Heart left ventricle (tissue), 16 donors: ENCODE measurements at regions of chr6 and their contacts with region 1.

Region 1: GRCh38 chr6:46704562-46704961 is 16.9 kb downstream of the TDRD6 start:
- DNase-seq: no peak
- ATAC-seq: peak in 3 of 4 donors; percentile 41 to 75 (median 56)
- H3K4me3 ChIP-seq: no peak overlapping the region
- H3K27ac ChIP-seq: no peak overlapping the region
- H3K4me1 ChIP-seq: peaks cover 0 to 7% (median 0%) of the 10 kb centered on the region in 12 donors
- H3K27me3 ChIP-seq: no peaks in the 10 kb centered on the region
- CTCF ChIP-seq: peak in 7 of 12 donors; percentile 12 to 34 (median 18)
- POLR2A ChIP-seq: no peak

Region 2: GRCh38 chr6:46772762-46773161 is 68.2 kb after region 1 on chr6:
- intact Hi-C with region 1: loop called in 1 of 10 experiments (anchors 10 kb)
- DNase-seq: peak; percentile 26 to 46 (median 31)
- ATAC-seq: peak; percentile 55 to 91 (median 84)
- H3K4me3 ChIP-seq: no peak overlapping the region
- H3K27ac ChIP-seq: peak overlapping the region in 1 of 12 donors; percentile 92
- H3K4me1 ChIP-seq: peaks cover 0 to 37% (median 1%) of the 10 kb centered on the region in 12 donors
- H3K27me3 ChIP-seq: no peaks in the 10 kb centered on the region
- CTCF ChIP-seq: no peak
- POLR2A ChIP-seq: no peak

Region 3: DNA sequence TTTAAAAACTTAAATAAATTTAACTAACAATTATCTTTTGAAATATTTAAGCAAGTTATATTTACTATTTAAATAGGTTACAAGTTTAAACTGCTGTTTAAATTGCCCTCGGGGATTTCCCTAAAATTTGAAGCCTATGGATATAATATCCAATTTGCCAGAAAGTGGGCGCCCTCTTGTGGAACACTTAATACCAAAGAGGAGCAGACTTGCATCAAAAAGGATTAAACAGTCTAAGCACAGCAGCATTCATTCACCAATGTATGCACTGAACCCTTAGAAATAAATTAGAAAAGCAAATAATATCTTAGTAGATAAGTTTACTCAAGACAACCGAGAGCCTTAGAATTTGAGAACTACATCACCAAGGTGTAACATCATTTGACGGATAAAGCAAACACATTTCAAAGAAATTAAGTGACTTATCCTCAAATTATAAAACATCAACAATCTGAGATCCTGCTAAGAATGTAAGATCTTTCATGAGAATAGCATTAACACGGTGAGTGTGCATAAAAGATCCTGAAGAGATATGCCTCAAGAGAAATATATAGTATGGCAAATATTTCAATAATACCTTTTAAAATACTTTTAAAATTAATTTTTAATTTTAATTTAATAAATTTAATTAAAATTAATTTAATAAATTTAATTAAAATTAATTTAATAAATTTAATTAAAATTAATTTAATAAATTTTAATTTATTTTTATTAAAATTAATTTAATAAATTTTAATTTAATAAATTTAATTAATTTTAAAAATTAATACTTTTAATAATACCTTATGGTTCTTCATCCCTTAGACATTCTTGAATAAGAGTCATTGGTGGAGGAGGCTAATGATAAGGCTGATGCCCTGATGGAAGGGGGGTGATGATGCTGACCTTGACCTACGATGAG is 77.2 kb after region 1 on chr6:
- intact Hi-C with region 1: loop called in 8 of 10 experiments (anchors 2 to 10 kb)
- DNase-seq: peak in 4 of 5 donors; percentile 38 to 52 (median 48)
- ATAC-seq: no peak
- H3K4me3 ChIP-seq: no peak overlapping the region
- H3K27ac ChIP-seq: no peak overlapping the region
- H3K4me1 ChIP-seq: peaks cover 0 to 5% (median 0%) of the 10 kb centered on the region in 12 donors
- H3K27me3 ChIP-seq: no peaks in the 10 kb centered on the region
- CTCF ChIP-seq: peak; percentile 26 to 77 (median 62)
- POLR2A ChIP-seq: no peak